ENCODE measurements at regions of chr10 and their contacts with region 1.

Region 1: GRCh38 chr10:114437456-114438292 is 33.4 kb upstream of the AFAP1L2 start:
- DNase-seq: no peak
- H3K4me3 ChIP-seq: no peak overlapping the region
- H3K27ac ChIP-seq: no peak overlapping the region
- H3K4me1 ChIP-seq: no peaks in the 10 kb centered on the region
- H3K27me3 ChIP-seq: no peaks in the 10 kb centered on the region
- CTCF ChIP-seq: peak; percentile 40 to 58 (median 47)
- EP300 ChIP-seq: no peak
- POLR2A ChIP-seq: no peak

Region 2: DNA sequence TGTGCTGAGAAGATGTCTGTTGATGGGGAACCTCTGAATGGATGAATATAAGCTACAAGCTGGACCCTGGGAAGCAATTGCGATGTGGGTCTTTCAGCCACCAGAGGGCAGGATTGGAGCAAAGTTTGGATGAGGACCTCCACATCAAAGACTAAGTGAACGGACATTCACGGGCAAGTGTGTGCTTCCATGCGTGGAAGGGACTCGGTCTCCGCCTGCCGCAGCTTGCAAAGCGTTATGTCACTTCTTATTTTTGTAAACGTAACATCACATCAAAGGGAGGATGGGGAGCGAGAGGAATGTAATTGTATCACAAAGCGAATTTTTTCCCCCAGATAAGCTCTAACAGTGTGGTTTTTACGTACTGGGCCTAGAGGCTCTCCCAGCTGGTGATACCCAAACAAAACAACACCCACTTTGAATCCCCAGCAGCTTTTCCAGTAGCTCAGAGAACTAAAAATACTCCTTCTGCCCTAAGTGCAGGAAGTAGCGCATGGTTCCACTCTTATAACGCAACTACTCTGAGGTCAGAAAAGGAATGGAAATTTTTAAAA is 133.6 kb before region 1 on chr10:
- in situ Hi-C with region 1: loop called in 2 of 4 experiments (anchors 25 kb)
- intact Hi-C with region 1: loop called (anchors 5 kb)
- DNase-seq: peak; percentile 84
- H3K4me3 ChIP-seq: peak overlapping the region in 2 of 4 donors; percentile 20 to 30
- H3K27ac ChIP-seq: peak overlapping the region; percentile 1 to 49 (median 29)
- H3K4me1 ChIP-seq: peaks cover 3 to 11% (median 8%) of the 10 kb centered on the region in 4 donors
- H3K27me3 ChIP-seq: no peaks in the 10 kb centered on the region
- CTCF ChIP-seq: peak; percentile 64 to 84 (median 79)
- EP300 ChIP-seq: no peak
- POLR2A ChIP-seq: no peak

Region 3: DNA sequence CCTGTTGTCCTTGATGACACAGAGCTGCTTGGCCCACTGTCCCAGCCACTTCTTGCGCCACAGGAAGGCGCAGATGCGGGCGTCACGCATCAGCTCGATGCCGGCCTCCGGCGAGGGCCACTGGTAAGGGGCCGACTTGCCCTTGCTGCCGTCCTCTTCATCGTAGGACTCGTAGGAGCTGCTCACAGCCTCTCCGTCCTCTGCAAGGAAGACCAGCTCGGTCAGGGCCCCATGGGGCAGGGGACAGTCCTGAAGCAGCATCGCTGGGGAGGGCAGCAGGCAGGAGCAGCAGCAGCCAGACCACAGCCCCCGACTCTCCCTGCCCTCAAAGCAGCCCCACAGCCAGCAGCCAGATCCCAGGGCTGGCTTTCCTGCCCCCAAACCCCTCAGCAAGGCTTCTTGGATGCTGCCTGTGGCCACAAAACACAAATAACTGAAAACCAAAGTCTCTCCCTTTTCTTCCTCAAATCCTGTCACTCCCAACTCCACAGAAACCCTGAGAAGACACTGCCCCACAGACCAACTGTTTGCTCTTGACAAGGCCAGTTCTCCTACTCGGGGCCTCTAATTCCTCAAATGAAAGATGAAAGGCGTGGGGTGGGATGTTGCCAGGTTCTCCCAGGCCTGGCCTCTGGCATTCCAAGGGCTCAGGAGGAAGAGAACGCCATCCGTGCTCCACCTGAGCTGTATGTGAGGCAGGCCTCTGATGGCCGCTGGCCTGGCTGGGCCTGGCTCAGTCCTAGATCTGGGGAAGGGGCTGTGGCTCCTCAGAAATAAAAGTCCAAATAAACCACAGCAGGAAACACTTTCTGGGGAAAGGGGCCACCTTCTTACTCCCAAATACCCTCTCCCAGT is 121.9 kb before region 1 on chr10:
- in situ Hi-C with region 1: loop called in 3 of 4 experiments (anchors 10 to 25 kb)
- intact Hi-C with region 1: no loop called
- DNase-seq: no peak
- H3K4me3 ChIP-seq: no peak overlapping the region
- H3K27ac ChIP-seq: no peak overlapping the region
- H3K4me1 ChIP-seq: no peaks in the 10 kb centered on the region
- H3K27me3 ChIP-seq: no peaks in the 10 kb centered on the region
- CTCF ChIP-seq: no peak
- EP300 ChIP-seq: no peak
- POLR2A ChIP-seq: no peak

Region 4: GRCh38 chr10:114337505-114338462 is 99.9 kb before region 1 on chr10:
- in situ Hi-C with region 1: no loop called
- intact Hi-C with region 1: no loop called
- DNase-seq: no peak
- H3K4me3 ChIP-seq: no peak overlapping the region
- H3K27ac ChIP-seq: no peak overlapping the region
- H3K4me1 ChIP-seq: peaks cover 0 to 8% (median 0%) of the 10 kb centered on the region in 4 donors
- H3K27me3 ChIP-seq: no peaks in the 10 kb centered on the region
- CTCF ChIP-seq: no peak
- EP300 ChIP-seq: no peak
- POLR2A ChIP-seq: no peak

Region 5: DNA sequence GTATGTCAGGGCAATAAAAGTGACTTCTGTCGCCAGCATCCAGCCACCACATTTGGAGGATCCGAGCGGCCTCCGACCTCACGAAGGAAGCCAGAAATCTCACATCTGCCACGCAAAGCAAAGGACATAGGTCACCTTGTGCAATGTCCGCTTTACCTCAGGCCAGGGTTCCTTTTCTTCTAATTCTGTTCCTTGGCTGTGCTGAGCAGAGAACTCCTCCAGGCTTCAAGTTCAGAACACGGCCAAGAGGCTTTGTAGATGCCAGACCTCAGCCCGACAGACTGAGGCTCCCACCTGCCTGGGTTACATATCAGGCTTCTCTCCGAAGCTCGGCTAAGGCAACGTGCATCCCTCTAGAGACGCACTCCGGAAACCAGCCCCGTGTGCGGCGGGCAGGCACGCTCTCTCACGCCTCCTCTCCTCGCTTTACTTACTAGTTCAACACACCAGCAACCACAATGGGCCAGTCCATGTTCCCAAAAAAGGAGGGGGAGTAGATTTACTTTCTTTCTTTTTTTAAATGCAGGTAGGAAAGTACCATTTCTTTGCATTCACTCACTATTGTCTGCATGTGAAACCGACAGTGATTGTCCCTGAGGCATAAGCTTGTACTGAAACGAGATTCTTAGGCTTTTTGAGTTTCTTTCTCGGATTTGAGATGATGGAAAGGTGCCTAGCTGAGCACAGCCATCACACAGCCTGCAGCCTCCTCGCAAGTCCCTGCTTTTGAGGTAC is 89.0 kb after region 1 on chr10:
- in situ Hi-C with region 1: no loop called
- intact Hi-C with region 1: no loop called
- DNase-seq: peak; percentile 91
- H3K4me3 ChIP-seq: peak overlapping the region; percentile 20 to 47 (median 30)
- H3K27ac ChIP-seq: peak overlapping the region; percentile 84 to 90 (median 88)
- H3K4me1 ChIP-seq: peaks cover 9 to 59% (median 45%) of the 10 kb centered on the region in 4 donors
- H3K27me3 ChIP-seq: no peaks in the 10 kb centered on the region
- CTCF ChIP-seq: no peak
- EP300 ChIP-seq: no peak
- POLR2A ChIP-seq: peak; percentile 97

Region 6: DNA sequence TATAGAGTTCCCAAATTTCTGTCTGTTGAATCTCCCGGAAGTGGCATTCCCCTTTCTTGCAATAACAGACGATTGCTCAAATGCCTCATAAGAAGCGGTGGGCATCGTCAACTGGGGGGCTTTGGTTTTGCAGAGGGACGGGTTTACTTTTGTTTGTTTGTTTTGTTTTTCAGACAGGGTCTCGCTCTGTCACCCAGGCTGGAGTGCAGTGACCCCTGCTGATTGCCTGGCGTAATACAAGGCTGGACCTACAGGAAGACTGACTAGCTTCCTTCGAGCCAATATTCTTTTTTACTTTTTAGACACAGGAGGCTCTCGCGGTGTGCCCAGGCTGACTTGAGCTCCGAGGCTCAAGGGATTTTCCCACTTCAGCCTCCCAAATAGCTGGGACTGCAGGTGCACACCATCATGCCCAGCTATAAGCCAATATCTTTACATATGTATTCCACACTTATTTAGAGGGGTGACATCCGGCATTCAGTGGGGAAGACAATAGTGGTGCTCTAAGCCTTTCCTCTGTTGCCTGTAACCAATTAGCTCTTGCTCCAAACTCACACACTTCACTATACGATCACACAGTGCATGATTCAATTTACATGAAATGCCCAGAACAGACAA is 442.0 kb after region 1 on chr10:
- in situ Hi-C with region 1: no loop called
- intact Hi-C with region 1: no loop called
- DNase-seq: peak; percentile 18
- H3K4me3 ChIP-seq: no peak overlapping the region
- H3K27ac ChIP-seq: no peak overlapping the region
- H3K4me1 ChIP-seq: peaks cover 0 to 12% (median 5%) of the 10 kb centered on the region in 4 donors
- H3K27me3 ChIP-seq: no peaks in the 10 kb centered on the region
- CTCF ChIP-seq: peak in 3 of 5 experiments; percentile 10 to 28 (median 14)
- EP300 ChIP-seq: no peak
- POLR2A ChIP-seq: no peak

Region 7: GRCh38 chr10:115030483-115031198 is 593.0 kb after region 1 on chr10:
- in situ Hi-C with region 1: no loop called
- intact Hi-C with region 1: no loop called
- DNase-seq: no peak
- H3K4me3 ChIP-seq: no peak overlapping the region
- H3K27ac ChIP-seq: no peak overlapping the region
- H3K4me1 ChIP-seq: no peaks in the 10 kb centered on the region
- H3K27me3 ChIP-seq: no peaks in the 10 kb centered on the region
- CTCF ChIP-seq: no peak
- EP300 ChIP-seq: no peak
- POLR2A ChIP-seq: no peak

Measured in transverse colon (tissue), 4 donors.